ENCODE measurements at regions of chr10 and their contacts with region 1.

Region 1: DNA sequence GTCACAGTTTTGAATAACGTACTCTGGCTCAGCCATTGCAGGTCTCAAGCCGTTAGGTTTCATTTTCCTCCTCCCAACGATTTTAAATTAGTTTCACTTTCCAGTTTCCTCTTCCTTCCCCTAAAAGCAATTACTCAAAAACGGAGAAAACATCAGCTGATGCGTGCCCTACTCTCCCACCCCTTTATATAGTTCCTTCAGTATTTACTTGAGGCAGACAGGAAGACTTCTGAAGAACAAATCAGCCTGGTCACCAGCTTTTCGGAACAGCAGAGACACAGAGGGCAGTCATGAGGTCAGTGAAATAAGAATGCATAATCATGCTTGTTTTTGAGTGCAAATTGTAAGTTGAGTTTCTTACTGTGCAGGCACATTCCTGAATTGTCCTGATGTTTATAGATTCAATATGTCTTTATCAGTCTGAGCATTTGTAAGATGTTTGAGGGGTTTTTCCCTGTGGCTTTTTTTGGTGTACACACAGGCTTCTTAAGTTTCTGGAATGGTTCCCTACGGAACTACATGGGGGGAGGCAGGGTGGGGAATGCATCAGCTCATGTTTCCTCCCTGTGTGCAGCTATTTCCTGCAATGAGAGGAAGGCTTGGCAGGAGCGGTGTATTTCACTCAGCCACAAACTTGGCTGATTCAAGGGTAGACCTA is at the start of gene IFIT3:
- DNase-seq: peak in 1 of 2 donors; percentile 85
- H3K4me3 ChIP-seq: peak within 1 kb of the TSS; percentile 51 to 60
- H3K27ac ChIP-seq: peak within 1 kb of the TSS; percentile 74
- H3K4me1 ChIP-seq: peaks cover 0 to 19% of the 10 kb centered on the region in 2 donors
- H3K27me3 ChIP-seq: no peaks in the 10 kb centered on the region
- CTCF ChIP-seq: no peak
- total RNA-seq, gene IFIT3: 1.9 TPM

Region 2: DNA sequence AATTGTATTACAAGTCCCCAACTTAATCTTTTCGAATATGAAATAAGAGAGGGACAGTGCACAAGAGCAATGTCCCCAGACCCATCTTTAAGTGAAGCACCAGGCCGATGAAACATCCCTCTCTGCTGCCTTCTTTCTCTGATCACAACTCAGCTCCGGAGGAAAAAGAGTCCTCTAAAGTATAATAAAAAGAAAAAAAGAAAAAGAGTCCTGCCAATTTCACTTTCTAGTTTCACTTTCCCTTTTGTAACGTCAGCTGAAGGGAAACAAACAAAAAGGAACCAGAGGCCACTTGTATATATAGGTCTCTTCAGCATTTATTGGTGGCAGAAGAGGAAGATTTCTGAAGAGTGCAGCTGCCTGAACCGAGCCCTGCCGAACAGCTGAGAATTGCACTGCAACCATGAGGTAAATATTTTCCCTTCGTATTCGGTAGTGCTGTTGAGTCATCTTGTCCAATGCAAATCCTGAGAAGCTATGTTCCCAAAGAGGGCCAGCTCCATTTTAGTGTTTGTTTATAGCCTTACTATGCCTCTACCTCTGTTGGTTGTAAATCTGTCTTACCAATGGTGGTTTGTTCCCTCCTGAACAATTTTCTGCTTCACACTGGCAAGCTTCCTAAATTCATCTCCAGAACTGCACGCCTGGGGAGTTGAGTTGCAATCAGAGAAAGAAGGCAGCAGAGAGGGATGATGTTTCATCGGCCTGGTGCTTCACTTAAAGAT is 26.0 kb before region 1 on chr10 and contains the start of gene IFIT2:
- intact Hi-C with region 1: loop called (anchors 2 kb)
- DNase-seq: no peak
- H3K4me3 ChIP-seq: peak within 1 kb of the TSS; percentile 46 to 66
- H3K27ac ChIP-seq: peak within 1 kb of the TSS; percentile 87 to 90
- H3K4me1 ChIP-seq: peaks cover 4 to 16% of the 10 kb centered on the region in 2 donors
- H3K27me3 ChIP-seq: no peaks in the 10 kb centered on the region
- CTCF ChIP-seq: no peak
- total RNA-seq, gene IFIT2: 0.85 TPM

Region 3: GRCh38 chr10:89351780-89352597 is 24.1 kb after region 1 on chr10:
- intact Hi-C with region 1: loop called (anchors 2 kb)
- DNase-seq: peak in 1 of 2 donors; percentile 83
- H3K4me3 ChIP-seq: peak overlapping the region in 1 of 2 donors; percentile 27
- H3K27ac ChIP-seq: peak overlapping the region; percentile 85 to 89
- H3K4me1 ChIP-seq: peaks cover 0 to 35% of the 10 kb centered on the region in 2 donors
- H3K27me3 ChIP-seq: no peaks in the 10 kb centered on the region
- CTCF ChIP-seq: no peak

Region 4: GRCh38 chr10:89369156-89370105 is 41.5 kb after region 1 on chr10:
- intact Hi-C with region 1: loop called (anchors 5 kb)
- DNase-seq: no peak
- H3K4me3 ChIP-seq: no peak overlapping the region
- H3K27ac ChIP-seq: no peak overlapping the region
- H3K4me1 ChIP-seq: peaks cover 9 to 27% of the 10 kb centered on the region in 2 donors
- H3K27me3 ChIP-seq: no peaks in the 10 kb centered on the region
- CTCF ChIP-seq: peak; percentile 37 to 61 (median 41)

Region 5: DNA sequence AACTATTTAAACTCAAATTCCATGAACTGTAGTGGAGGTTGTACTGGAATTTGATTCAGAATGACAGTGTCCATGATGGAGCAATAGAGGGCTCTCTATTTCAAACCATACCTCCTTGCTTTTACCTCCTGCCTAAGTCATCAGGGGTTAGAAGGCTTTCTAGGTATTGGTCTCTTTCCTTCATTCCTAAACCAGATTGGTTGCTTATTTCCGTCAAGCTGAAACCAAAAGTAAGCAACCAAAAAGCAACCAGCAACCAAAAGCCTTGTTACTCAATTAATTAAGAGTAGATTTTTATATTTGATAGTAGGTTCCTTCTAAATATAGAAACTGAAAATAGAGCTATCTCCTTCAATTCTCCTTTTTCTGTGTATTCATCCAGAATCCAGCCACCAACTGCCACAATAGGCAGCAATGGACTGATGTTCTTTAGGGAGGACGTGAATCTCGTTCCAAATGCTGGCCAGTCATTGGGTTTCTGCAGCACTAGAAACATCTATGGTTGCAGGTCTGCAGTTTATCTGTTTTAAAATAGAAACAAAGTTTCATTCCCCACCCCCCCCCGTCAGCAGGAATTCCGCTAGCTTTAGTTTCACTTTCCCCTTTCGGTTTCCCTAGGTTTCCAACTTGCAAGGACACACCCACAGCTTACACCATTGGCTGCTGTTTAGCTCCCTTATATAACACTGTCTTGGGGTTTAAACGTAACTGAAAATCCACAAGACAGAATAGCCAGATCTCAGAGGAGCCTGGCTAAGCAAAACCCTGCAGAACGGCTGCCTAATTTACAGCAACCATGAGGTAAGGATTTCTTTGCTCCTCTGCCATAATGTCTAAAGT is 64.2 kb after region 1 on chr10 and contains the start of gene IFIT1:
- intact Hi-C with region 1: loop called (anchors 5 kb)
- DNase-seq: peak in 1 of 2 donors; percentile 81
- H3K4me3 ChIP-seq: peak within 1 kb of the TSS; percentile 71 to 73
- H3K27ac ChIP-seq: peak within 1 kb of the TSS; percentile 73 to 76
- H3K4me1 ChIP-seq: peaks cover 3 to 28% of the 10 kb centered on the region in 2 donors
- H3K27me3 ChIP-seq: no peaks in the 10 kb centered on the region
- CTCF ChIP-seq: no peak
- total RNA-seq, gene IFIT1: 28.5 TPM

Region 6: DNA sequence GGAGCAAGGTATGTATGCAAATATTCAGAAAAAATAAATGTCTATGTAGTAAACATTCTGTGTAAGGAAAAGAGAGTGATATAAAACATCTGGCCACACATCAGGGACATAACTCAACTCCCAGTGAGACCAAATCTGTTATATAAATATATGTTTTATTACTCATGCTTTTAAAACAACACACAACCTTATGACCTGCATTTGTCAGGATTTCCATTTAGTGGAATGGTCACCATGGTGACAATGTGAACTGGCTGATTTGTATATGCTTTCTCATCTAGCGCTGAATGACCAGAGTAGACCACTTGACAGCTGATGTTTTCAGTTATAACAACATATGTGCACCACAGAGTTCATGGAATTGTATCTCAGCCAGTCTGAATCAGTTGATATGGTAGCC is 978.3 kb after region 1 on chr10:
- intact Hi-C with region 1: no loop called
- DNase-seq: peak in 1 of 2 donors; percentile 67
- H3K4me3 ChIP-seq: no peak overlapping the region
- H3K27ac ChIP-seq: peak overlapping the region in 1 of 2 donors; percentile 57
- H3K4me1 ChIP-seq: peaks cover 0 to 14% of the 10 kb centered on the region in 2 donors
- H3K27me3 ChIP-seq: no peaks in the 10 kb centered on the region
- CTCF ChIP-seq: no peak